ENCODE measurements at regions of chr5 and their contacts with region 1.

Region 1: DNA sequence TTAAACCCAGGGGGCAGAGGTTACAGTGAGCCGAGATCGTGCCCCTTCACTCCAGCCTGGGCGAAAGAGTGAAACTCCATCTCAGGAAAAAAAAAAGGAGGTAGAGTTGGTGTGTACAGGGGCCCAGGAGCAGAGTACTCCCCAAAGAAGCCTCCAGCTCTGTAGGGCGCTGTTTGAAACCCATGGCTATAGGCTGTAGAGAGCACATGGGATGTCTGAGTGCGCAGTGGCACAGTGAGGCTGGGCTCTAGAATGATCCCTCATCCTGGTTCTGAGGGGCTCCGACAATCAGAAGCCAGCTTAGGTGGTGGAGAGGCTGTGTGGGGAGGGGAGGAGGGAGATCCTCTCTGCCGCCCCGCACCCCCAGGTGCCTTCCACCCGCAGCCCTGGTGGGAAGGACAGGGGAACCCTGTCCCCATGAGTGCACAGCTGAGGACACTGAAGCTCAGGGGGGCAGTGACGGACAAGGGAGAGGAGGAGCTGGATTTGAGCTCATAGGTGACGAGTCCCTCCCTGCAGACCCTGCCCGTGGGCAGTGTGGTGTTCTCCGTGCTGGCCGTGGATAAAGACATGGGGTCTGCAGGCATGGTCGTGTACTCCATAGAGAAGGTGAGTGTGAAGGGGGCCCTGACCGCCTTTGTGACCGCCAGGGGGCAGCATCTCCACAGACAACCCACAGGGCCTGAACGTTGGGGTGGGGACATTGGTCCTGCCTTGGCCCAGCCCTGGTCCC is 24.6 kb downstream of the CDHR2 start:
- DNase-seq: peak; percentile 94
- H3K4me3 ChIP-seq: no peak overlapping the region
- H3K27ac ChIP-seq: no peak overlapping the region
- H3K4me1 ChIP-seq: no peaks in the 10 kb centered on the region; a peak in 1 of 4 replicates
- H3K27me3 ChIP-seq: peaks cover 4% of the 10 kb centered on the region; the same call in 1 of the 2 replicates
- CTCF ChIP-seq: peak; percentile 85
- EP300 ChIP-seq: no peak
- RAD21 ChIP-seq: peak; percentile 85

Region 2: GRCh38 chr5:176559683-176560082 is 14.0 kb before region 1 on chr5:
- CTCF ChIA-PET with region 1: interaction called, 11 read pairs
- POLR2A ChIA-PET with region 1: no interaction called
- DNase-seq: no peak
- H3K4me3 ChIP-seq: no peak overlapping the region
- H3K27ac ChIP-seq: no peak overlapping the region
- H3K4me1 ChIP-seq: no peaks in the 10 kb centered on the region
- H3K27me3 ChIP-seq: no peaks in the 10 kb centered on the region
- CTCF ChIP-seq: no peak
- EP300 ChIP-seq: no peak
- RAD21 ChIP-seq: no peak

Region 3: DNA sequence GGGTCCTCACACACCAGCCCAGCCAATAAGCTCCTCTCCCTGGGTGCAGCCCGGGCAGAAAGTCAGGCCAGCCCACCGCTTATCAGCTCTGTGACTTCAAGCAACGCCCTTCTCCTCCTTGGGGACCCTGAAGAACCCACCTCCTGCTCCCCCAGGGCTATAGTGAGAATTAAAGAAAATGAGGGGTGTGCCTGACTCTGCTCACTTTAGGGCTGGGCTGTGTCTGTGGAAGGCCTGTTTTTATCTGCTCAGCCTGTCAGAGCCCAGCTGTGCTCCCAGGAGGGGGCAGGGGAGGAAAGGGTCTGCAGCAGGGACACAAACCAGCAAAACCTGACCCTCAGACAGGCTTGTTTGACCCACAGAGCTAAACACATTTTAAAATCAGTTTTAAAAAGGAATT is 32.3 kb after region 1 on chr5:
- CTCF ChIA-PET with region 1: interaction called, 15 read pairs
- POLR2A ChIA-PET with region 1: no interaction called
- DNase-seq: no peak
- H3K4me3 ChIP-seq: no peak overlapping the region
- H3K27ac ChIP-seq: no peak overlapping the region
- H3K4me1 ChIP-seq: peaks cover 0 to 30% of the 10 kb centered on the region in 2 experiments; a peak in 1 of 4 replicates
- H3K27me3 ChIP-seq: no peaks in the 10 kb centered on the region
- CTCF ChIP-seq: no peak
- EP300 ChIP-seq: no peak
- RAD21 ChIP-seq: no peak

Region 4: GRCh38 chr5:176619203-176619568 is 45.5 kb after region 1 on chr5:
- CTCF ChIA-PET with region 1: interaction called, 49 read pairs
- POLR2A ChIA-PET with region 1: no interaction called
- DNase-seq: peak; percentile 98
- H3K4me3 ChIP-seq: peak overlapping the region; percentile 29 to 57; a peak in 3 of 4 replicates
- H3K27ac ChIP-seq: no peak overlapping the region
- H3K4me1 ChIP-seq: peaks cover 6 to 26% of the 10 kb centered on the region in 2 experiments; a peak in 3 of 4 replicates
- H3K27me3 ChIP-seq: peaks cover 21% of the 10 kb centered on the region
- CTCF ChIP-seq: peak; percentile 59
- EP300 ChIP-seq: no peak
- RAD21 ChIP-seq: peak; percentile 79

Region 5: DNA sequence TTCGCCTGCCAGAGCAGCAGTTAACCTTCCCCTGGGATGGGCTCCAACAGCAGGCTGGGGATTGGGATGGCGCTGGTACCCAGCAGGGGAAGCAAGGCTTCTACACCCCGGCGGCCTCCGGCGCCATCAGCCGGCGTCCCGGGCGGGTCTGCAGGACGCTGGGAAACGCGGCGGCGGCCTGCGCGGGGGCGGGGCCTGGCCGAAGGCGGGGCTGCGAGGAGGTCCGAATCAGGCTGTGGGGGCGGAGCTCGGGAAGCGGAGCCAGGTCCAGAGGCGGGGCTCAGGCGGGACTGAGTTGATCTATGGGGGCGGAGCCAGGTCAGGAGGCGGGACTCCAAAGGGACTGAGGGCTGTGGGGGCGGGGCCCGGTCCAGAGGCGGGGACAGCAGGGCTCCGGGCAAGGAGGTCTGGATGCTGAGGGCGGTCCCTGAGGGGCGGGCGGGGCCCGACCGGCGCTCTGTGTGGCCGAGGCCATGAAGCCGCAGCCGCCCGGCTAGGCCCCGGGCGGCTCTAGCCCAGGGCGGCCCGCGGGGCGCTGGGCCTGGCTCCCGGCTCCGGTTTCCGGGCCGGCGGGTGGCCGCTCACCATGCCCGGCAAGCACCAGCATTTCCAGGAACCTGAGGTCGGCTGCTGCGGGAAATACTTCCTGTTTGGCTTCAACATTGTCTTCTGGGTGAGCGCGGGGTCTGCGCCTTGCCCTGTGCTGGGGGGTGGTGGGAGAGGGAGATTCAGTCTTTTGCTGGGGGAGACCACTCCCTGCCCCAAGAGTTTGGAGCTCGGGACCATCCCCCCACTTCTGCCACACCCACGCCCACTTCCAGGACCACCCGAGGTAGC is 73.5 kb after region 1 on chr5 and contains the start of gene TSPAN17:
- CTCF ChIA-PET with region 1: interaction called, 38 read pairs
- POLR2A ChIA-PET with region 1: no interaction called
- DNase-seq: peak; percentile 100
- H3K4me3 ChIP-seq: peak within 1 kb of the TSS; percentile 89 to 94
- H3K27ac ChIP-seq: peak within 1 kb of the TSS; percentile 52 to 87; a peak in 3 of 4 replicates
- H3K4me1 ChIP-seq: peaks cover 4 to 42% of the 10 kb centered on the region in 2 experiments; a peak in 2 of 4 replicates
- H3K27me3 ChIP-seq: no peaks in the 10 kb centered on the region
- CTCF ChIP-seq: peak; percentile 46
- EP300 ChIP-seq: no peak; a peak in 1 of 4 replicates
- RAD21 ChIP-seq: peak; percentile 69
- polyA plus RNA-seq, gene TSPAN17: 61.7 and 68.4 TPM in 2 replicates